ENCODE measurements at regions of chr11 and their contacts with region 1.

Region 1: GRCh38 chr11:10351768-10352641 is 47.1 kb downstream of the ADM start:
- H3K4me3 ChIP-seq: no peak overlapping the region
- H3K27ac ChIP-seq: no peak overlapping the region
- H3K4me1 ChIP-seq: no peaks in the 10 kb centered on the region
- CTCF ChIP-seq: no peak

Region 2: DNA sequence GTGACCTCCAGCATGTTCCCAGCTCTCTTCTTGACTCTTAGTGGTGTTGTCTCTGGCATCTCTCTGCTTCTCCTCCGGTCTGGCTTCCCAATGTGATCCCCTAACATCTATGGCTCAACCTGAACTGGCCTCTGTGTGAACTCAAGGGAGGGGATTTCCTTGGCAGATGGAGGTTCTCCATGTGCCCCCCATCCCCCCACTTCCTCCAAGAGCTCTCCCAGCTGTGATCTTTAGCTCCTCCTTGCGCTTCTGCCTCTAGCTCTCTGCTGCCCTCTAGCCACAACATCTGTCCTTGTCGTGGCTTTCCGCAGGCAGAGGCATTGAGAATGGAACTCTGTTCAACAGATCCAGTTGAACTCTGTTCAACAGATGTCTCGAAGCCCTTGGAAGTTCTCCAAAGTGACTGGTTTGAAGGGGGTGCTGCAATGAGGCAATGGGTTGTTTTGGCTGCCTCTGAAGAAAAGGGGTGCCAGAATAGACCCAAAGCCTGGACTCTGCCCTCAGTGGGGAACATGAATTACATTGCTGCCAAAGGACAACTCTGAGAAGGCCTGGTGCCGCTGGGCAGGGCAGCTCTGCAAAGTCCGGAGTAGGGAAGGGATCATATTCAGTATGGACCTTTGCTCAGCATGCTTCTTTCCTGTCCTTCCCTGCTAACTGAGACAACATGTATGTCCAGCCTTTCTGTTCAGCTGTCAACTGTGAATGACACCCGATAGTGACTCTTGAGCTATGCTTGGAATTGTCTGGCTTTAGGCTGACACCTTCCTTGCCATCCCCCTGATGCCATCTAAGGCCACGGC is 14.8 kb after region 1 on chr11:
- CTCF ChIA-PET with region 1: interaction called, 41 read pairs
- POLR2A ChIA-PET with region 1: no interaction called
- H3K4me3 ChIP-seq: no peak overlapping the region
- H3K27ac ChIP-seq: no peak overlapping the region
- H3K4me1 ChIP-seq: no peaks in the 10 kb centered on the region
- CTCF ChIP-seq: peak; percentile 64

Region 3: DNA sequence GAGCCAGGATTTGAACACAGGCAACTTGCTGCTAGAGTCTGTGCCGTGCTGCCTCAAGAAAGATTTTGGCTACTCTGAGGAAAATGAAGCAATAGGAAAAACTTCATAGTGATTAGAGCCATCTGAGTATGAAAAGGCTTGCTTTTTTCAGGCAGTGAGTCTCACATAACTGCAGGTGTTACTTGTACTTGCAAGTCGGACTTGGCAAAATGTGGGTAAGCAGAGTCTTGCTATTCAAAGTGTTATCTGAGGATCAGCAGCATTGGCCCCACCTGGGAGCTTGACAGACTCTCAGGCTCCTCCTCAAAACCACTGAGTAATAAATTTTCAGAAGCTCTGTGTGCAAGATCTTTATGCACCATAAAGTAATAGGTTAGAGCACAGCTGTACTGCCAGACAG is 170.9 kb after region 1 on chr11:
- CTCF ChIA-PET with region 1: no interaction called
- POLR2A ChIA-PET with region 1: no interaction called
- H3K4me3 ChIP-seq: no peak overlapping the region
- H3K27ac ChIP-seq: no peak overlapping the region
- H3K4me1 ChIP-seq: no peaks in the 10 kb centered on the region
- CTCF ChIP-seq: no peak

Measured in HEK293 (cell line).